ENCODE measurements at regions of chr1 and their contacts with region 1.

Region 1: DNA sequence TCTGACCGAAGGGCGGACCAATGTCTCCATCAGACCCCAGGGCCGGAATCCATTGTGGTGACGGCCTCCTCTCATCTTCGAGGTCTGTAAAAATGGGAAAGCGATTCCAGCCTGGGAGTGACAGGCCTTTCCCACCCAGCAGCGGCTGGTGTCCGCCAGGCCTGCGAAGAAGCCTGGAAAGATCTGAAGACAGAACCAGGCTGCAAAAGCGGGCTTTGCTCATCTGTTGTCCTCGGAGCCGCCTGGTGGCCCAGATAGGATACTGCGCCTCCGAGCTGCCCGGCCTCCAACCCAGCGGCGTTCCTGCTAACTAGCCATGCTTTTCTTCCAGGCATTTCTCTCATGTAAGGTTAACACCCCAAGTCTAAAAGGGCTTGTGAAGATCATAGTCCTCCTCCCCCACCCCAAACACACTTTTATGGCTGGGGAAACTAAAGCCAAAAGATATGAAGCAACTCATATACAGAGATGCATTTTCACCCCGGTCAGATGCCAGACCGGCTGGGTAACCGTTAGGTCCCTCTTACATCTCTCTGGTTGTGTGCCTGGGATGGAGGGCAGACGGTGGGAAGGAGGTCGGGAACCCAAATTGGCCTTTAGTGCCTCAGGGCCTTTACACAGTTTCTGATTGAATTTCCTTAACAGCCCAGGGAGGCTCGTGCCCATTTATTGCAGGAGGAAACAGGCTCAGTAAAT is 1.9 kb upstream of the DHRS3 start:
- DNase-seq: peak; percentile 84 to 95 (median 91)
- H3K4me3 ChIP-seq: peak overlapping the region in 1 of 4 donors; percentile 67
- H3K27ac ChIP-seq: peak overlapping the region in 4 of 5 donors; percentile 67 to 92 (median 82)
- H3K4me1 ChIP-seq: peaks cover 17 to 45% of the 10 kb centered on the region in 2 donors
- H3K27me3 ChIP-seq: no peaks in the 10 kb centered on the region
- CTCF ChIP-seq: peak; percentile 92 to 98 (median 95)
- POLR2A ChIP-seq: no peak

Region 2: GRCh38 chr1:12314333-12314903 is 305.5 kb before region 1 on chr1:
- intact Hi-C with region 1: loop called (anchors 5 to 10 kb)
- DNase-seq: no peak
- H3K4me3 ChIP-seq: no peak overlapping the region
- H3K27ac ChIP-seq: peak overlapping the region in 1 of 5 donors; percentile 1
- H3K4me1 ChIP-seq: peaks cover 5 to 20% of the 10 kb centered on the region in 2 donors
- H3K27me3 ChIP-seq: no peaks in the 10 kb centered on the region
- CTCF ChIP-seq: peak; percentile 17 to 60 (median 50)
- POLR2A ChIP-seq: no peak

Region 3: GRCh38 chr1:12549460-12550349 is 70.2 kb before region 1 on chr1:
- intact Hi-C with region 1: loop called in 1 of 2 experiments (anchors 10 kb)
- DNase-seq: peak; percentile 79 to 91 (median 85)
- H3K4me3 ChIP-seq: peak overlapping the region in 1 of 4 donors; percentile 19
- H3K27ac ChIP-seq: peak overlapping the region; percentile 52 to 92 (median 69)
- H3K4me1 ChIP-seq: peaks cover 9 to 20% of the 10 kb centered on the region in 2 donors
- H3K27me3 ChIP-seq: peaks cover 6% of the 10 kb centered on the region
- CTCF ChIP-seq: no peak
- POLR2A ChIP-seq: peak in 1 of 2 donors; percentile 19